Activated naive CD4-positive, alpha-beta T cell treated with anti-CD3 and anti-CD28 coated beads for 36 hours (primary cell): ENCODE measurements at regions of chr5 and their contacts with region 1.

Region 1: GRCh38 chr5:98905857-98906690 is 22.7 kb downstream of the CHD1 start:
- DNase-seq: no peak
- H3K4me3 Mint-ChIP-seq: no peak overlapping the region
- H3K27ac Mint-ChIP-seq: no peak overlapping the region
- H3K4me1 Mint-ChIP-seq: peaks cover 43% of the 10 kb centered on the region
- H3K27me3 Mint-ChIP-seq: no peaks in the 10 kb centered on the region

Region 2: GRCh38 chr5:99004960-99005359 is 98.9 kb after region 1 on chr5:
- CTCF ChIA-PET with region 1: no interaction called
- intact Hi-C with region 1: loop called (anchors 1 kb)
- DNase-seq: peak; percentile 47
- H3K4me3 Mint-ChIP-seq: no peak overlapping the region
- H3K27ac Mint-ChIP-seq: no peak overlapping the region
- H3K4me1 Mint-ChIP-seq: peaks cover 17% of the 10 kb centered on the region
- H3K27me3 Mint-ChIP-seq: no peaks in the 10 kb centered on the region

Region 3: DNA sequence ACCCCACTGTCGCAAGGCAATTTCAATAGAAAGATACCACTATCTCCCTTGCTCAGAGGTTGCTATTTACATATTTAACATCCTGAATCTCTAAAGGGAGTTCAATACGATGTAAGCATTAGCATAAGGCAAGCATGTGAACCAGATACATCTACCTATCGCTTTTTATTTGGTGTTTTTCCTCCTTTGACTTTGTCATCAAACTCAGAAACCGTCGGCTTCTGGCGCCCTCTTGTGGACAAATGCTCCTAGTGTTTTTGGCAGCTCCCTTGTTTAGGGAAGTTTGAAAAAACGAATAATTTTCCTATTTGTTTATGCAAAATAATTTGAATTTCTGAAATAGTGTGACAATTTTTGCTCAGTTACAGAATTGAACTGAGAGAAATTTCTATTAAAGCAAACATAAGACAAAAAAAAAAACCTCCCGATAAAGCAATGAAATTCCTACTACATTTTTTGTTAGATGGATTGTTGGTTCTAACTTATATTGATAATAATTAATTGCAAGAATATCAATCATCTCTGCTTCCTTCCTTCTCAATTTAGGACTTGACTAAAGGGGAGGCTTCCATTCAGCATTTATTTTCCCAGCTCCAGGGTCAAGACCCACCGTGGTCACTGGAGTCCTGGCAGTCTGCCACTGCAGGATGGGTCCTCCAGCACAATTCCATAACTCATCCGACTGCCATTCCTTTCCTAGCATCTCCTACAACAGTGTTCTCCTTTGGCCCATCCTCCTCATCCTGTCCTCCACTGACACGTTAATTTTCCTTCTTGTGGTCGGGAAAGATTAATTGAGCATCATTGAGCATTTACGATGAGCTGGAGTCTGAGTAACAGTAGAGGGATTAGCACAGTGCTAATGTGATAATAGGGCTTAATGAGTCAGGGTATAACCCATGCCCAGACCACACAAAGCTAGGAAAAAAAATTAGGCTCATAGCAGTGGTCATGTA is 154.5 kb after region 1 on chr5:
- CTCF ChIA-PET with region 1: interaction called, 23 read pairs
- intact Hi-C with region 1: loop called (anchors 1 kb)
- DNase-seq: peak; percentile 92
- H3K4me3 Mint-ChIP-seq: no peak overlapping the region
- H3K27ac Mint-ChIP-seq: no peak overlapping the region
- H3K4me1 Mint-ChIP-seq: peaks cover 1% of the 10 kb centered on the region
- H3K27me3 Mint-ChIP-seq: no peaks in the 10 kb centered on the region